ENCODE measurements at regions of chr1 and their contacts with region 1.

Region 1: DNA sequence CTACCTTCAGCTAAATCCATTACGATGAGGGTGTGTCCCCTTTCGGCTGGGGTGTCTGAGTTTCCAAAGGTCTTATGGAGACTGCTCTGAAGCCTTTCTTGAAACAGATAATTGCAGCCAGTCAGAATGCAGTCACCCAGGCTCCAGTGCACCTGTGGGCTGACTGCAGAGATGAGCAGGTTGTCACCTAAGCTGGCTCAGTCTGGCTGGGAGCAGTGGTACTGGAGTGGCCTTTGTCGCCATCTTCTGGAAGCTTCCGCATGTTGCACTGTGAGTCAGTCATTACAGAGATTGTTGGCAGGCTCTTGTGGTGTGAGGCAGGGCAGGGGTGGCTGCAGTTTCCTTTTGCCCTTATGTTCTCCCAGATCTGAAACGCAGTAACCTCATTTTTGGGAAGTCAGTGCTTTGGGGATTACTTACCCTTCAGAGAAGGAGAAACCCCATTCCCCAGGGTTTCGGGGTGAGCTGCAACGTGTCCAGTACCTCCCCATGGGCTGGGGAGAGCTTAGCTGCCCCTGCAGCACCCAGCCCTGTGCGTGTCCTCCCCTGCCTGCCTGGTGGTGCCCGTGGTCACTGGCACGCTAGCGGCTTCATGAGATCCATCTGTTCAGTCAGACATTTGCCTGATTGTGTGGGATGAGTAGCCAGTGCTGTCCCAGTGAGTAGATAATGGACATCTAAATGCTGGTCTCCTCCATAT is 48.0 kb downstream of the SMYD2 start:
- DNase-seq: peak; percentile 64 to 89
- ATAC-seq: peak; percentile 90 to 96 (median 96)
- H3K4me3 ChIP-seq: no peak overlapping the region
- H3K4me3 Mint-ChIP-seq: no peak overlapping the region
- H3K27ac ChIP-seq: no peak overlapping the region
- H3K27ac Mint-ChIP-seq: no peak overlapping the region
- H3K4me1 ChIP-seq: no peaks in the 10 kb centered on the region
- H3K4me1 Mint-ChIP-seq: peaks cover 0 to 4% of the 10 kb centered on the region in 2 donors
- H3K27me3 ChIP-seq: no peaks in the 10 kb centered on the region
- H3K27me3 Mint-ChIP-seq: no peaks in the 10 kb centered on the region
- CTCF ChIP-seq: peak; percentile 80

Region 2: GRCh38 chr1:213122514-213122929 is 1206.4 kb before region 1 on chr1:
- intact Hi-C with region 1: loop called (anchors 5 kb)
- DNase-seq: peak in 1 of 2 donors; percentile 53
- ATAC-seq: no peak
- H3K4me3 ChIP-seq: no peak overlapping the region
- H3K4me3 Mint-ChIP-seq: no peak overlapping the region
- H3K27ac ChIP-seq: no peak overlapping the region
- H3K27ac Mint-ChIP-seq: no peak overlapping the region
- H3K4me1 ChIP-seq: no peaks in the 10 kb centered on the region
- H3K4me1 Mint-ChIP-seq: peaks cover 4 to 7% of the 10 kb centered on the region in 2 donors
- H3K27me3 ChIP-seq: no peaks in the 10 kb centered on the region
- H3K27me3 Mint-ChIP-seq: no peaks in the 10 kb centered on the region
- CTCF ChIP-seq: peak; percentile 83

Region 3: GRCh38 chr1:214058076-214058475 is 270.8 kb before region 1 on chr1:
- intact Hi-C with region 1: no loop called
- DNase-seq: no peak
- ATAC-seq: no peak
- H3K4me3 ChIP-seq: no peak overlapping the region
- H3K4me3 Mint-ChIP-seq: no peak overlapping the region
- H3K27ac ChIP-seq: no peak overlapping the region
- H3K27ac Mint-ChIP-seq: no peak overlapping the region
- H3K4me1 ChIP-seq: no peaks in the 10 kb centered on the region
- H3K4me1 Mint-ChIP-seq: no peaks in the 10 kb centered on the region
- H3K27me3 ChIP-seq: no peaks in the 10 kb centered on the region
- H3K27me3 Mint-ChIP-seq: no peaks in the 10 kb centered on the region
- CTCF ChIP-seq: no peak

Region 4: GRCh38 chr1:214234635-214235025 is 94.3 kb before region 1 on chr1:
- intact Hi-C with region 1: no loop called
- DNase-seq: no peak
- ATAC-seq: no peak
- H3K4me3 ChIP-seq: no peak overlapping the region
- H3K4me3 Mint-ChIP-seq: no peak overlapping the region
- H3K27ac ChIP-seq: no peak overlapping the region
- H3K27ac Mint-ChIP-seq: no peak overlapping the region
- H3K4me1 ChIP-seq: no peaks in the 10 kb centered on the region
- H3K4me1 Mint-ChIP-seq: no peaks in the 10 kb centered on the region
- H3K27me3 ChIP-seq: peaks cover 2% of the 10 kb centered on the region
- H3K27me3 Mint-ChIP-seq: peaks cover 15 to 16% of the 10 kb centered on the region in 2 donors
- CTCF ChIP-seq: no peak

Region 5: GRCh38 chr1:214261206-214262123 is 67.5 kb before region 1 on chr1:
- intact Hi-C with region 1: loop called (anchors 1 kb)
- DNase-seq: peak; percentile 73 to 87
- ATAC-seq: peak; percentile 89 to 99 (median 99)
- H3K4me3 ChIP-seq: no peak overlapping the region
- H3K4me3 Mint-ChIP-seq: no peak overlapping the region
- H3K27ac ChIP-seq: no peak overlapping the region
- H3K27ac Mint-ChIP-seq: no peak overlapping the region
- H3K4me1 ChIP-seq: no peaks in the 10 kb centered on the region
- H3K4me1 Mint-ChIP-seq: peaks cover 0 to 5% of the 10 kb centered on the region in 2 donors
- H3K27me3 ChIP-seq: peaks cover 23% of the 10 kb centered on the region
- H3K27me3 Mint-ChIP-seq: peaks cover 41 to 76% of the 10 kb centered on the region in 2 donors
- CTCF ChIP-seq: peak; percentile 90

Region 6: GRCh38 chr1:214584805-214585766 is 256.2 kb after region 1 on chr1:
- intact Hi-C with region 1: loop called (anchors 2 kb)
- DNase-seq: no peak
- ATAC-seq: peak in 2 of 3 donors; percentile 29 to 38
- H3K4me3 ChIP-seq: no peak overlapping the region
- H3K4me3 Mint-ChIP-seq: no peak overlapping the region
- H3K27ac ChIP-seq: no peak overlapping the region
- H3K27ac Mint-ChIP-seq: no peak overlapping the region
- H3K4me1 ChIP-seq: no peaks in the 10 kb centered on the region
- H3K4me1 Mint-ChIP-seq: no peaks in the 10 kb centered on the region
- H3K27me3 ChIP-seq: no peaks in the 10 kb centered on the region
- H3K27me3 Mint-ChIP-seq: peaks cover 0 to 8% of the 10 kb centered on the region in 2 donors
- CTCF ChIP-seq: peak; percentile 40

Region 7: DNA sequence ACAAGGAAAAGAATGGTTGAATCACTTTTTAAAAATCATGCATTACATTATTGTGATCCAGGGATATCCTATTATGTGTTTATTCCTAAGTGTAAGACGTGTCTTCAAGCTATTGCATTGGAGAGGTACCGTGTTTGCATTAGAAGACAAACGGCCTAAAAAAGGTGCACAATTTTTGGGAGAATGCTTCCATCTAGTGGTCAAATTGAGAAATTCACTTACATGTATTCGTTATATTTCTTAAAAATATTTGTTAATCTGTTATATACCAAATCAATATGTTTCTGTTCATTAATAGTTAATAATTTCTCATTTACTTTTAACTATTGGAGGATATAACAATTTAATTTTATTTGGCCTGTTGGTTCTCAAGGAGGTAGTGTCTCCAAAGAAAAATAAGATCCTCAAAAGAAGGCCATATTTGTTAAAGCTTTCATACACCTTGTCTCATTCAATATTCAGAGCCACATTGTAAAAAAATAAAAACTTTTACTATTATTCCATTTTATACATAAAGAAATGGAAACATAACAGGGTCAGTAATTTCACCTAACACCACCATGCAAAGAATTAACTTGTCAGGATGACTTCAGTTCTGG is 1197.7 kb after region 1 on chr1:
- intact Hi-C with region 1: loop called (anchors 10 kb)
- DNase-seq: peak in 1 of 2 donors; percentile 67
- ATAC-seq: no peak
- H3K4me3 ChIP-seq: no peak overlapping the region
- H3K4me3 Mint-ChIP-seq: no peak overlapping the region
- H3K27ac ChIP-seq: no peak overlapping the region
- H3K27ac Mint-ChIP-seq: no peak overlapping the region
- H3K4me1 ChIP-seq: no peaks in the 10 kb centered on the region
- H3K4me1 Mint-ChIP-seq: no peaks in the 10 kb centered on the region
- H3K27me3 ChIP-seq: no peaks in the 10 kb centered on the region
- H3K27me3 Mint-ChIP-seq: no peaks in the 10 kb centered on the region
- CTCF ChIP-seq: peak; percentile 45

Measured in natural killer cell (primary cell).